HEK293 (cell line): ENCODE measurements at regions of chr1 and their contacts with region 1.

Region 1: GRCh38 chr1:222792744-222793143 is 22.1 kb upstream of the DISP1 start:
- H3K4me3 ChIP-seq: no peak overlapping the region
- H3K27ac ChIP-seq: no peak overlapping the region
- H3K4me1 ChIP-seq: no peaks in the 10 kb centered on the region
- CTCF ChIP-seq: peak; percentile 51; the same call in 1 of the 2 replicates

Region 2: DNA sequence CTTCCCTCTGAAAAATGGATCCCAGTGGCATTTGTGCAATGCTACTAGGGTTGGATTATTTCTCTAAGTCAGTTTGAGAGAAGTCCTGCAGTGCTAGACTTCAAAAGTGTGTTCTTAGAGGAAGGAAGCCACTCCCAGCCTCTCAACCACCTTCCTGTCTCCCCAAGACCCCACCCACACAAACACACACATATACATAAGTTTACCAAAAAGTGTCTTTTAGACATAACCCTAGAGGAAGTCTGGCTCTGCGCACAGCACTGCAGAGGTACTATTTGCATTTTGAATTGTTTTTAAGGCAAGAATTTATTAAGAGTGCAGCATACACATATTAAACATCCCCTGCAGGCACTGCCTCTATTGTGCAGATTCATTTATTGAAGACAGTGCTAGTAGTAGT is 372.1 kb before region 1 on chr1:
- CTCF ChIA-PET with region 1: no interaction called
- POLR2A ChIA-PET with region 1: no interaction called
- H3K4me3 ChIP-seq: no peak overlapping the region
- H3K27ac ChIP-seq: no peak overlapping the region
- H3K4me1 ChIP-seq: no peaks in the 10 kb centered on the region
- CTCF ChIP-seq: no peak

Region 3: GRCh38 chr1:222777977-222778376 is 14.8 kb before region 1 on chr1:
- CTCF ChIA-PET with region 1: no interaction called
- POLR2A ChIA-PET with region 1: no interaction called
- H3K4me3 ChIP-seq: no peak overlapping the region
- H3K27ac ChIP-seq: no peak overlapping the region
- H3K4me1 ChIP-seq: no peaks in the 10 kb centered on the region
- CTCF ChIP-seq: no peak

Region 4: DNA sequence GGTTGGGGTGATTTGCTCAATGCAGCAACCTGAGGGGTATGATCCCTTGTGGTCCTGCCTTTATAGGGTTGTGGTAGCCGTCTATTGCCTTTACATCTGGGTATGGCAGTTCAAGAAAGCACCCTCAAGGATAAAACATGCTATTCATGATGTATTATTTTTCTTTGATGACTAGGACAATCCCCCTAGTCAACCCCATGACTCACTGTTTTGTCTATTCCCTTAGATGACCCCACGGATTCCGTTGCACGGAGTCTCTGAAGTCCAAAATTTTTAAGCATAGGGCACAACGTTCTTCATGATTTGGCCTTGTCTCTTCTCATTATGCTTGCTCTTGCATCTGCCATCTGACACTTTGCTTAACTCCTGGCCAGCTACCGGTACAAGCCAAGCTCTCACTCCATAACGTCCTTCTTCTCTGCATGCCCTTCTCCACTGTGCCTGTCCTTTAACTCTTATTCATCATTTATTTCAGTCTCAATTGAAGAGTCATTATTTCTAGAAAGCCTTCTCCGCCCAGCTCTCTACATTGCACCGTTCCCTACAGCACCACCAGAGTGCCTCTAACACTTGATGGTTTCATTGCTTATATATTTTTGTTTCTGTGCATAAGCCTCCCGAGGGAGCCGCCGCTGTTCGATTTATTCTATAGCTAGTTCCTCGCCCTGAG is 21.3 kb after region 1 on chr1:
- CTCF ChIA-PET with region 1: no interaction called
- POLR2A ChIA-PET with region 1: no interaction called
- H3K4me3 ChIP-seq: no peak overlapping the region; the same call in 1 of the 2 replicates
- H3K27ac ChIP-seq: peak overlapping the region; percentile 93
- H3K4me1 ChIP-seq: peaks cover 6% of the 10 kb centered on the region
- CTCF ChIP-seq: peak; percentile 49

Region 5: GRCh38 chr1:222843434-222844188 is 50.9 kb after region 1 on chr1:
- CTCF ChIA-PET with region 1: no interaction called
- POLR2A ChIA-PET with region 1: no interaction called
- H3K4me3 ChIP-seq: no peak overlapping the region
- H3K27ac ChIP-seq: no peak overlapping the region
- H3K4me1 ChIP-seq: peaks cover 9% of the 10 kb centered on the region; the same call in 1 of the 2 replicates
- CTCF ChIP-seq: no peak

Region 6: GRCh38 chr1:223081181-223081994 is 288.6 kb after region 1 on chr1:
- CTCF ChIA-PET with region 1: interaction called, 12 read pairs
- POLR2A ChIA-PET with region 1: no interaction called
- H3K4me3 ChIP-seq: no peak overlapping the region; the same call in 1 of the 2 replicates
- H3K27ac ChIP-seq: peak overlapping the region; percentile 66
- H3K4me1 ChIP-seq: no peaks in the 10 kb centered on the region
- CTCF ChIP-seq: peak; percentile 99